Right ventricle myocardium inferior (tissue), 1 donor: ENCODE measurements at regions of chr5 and their contacts with region 1.

Region 1: DNA sequence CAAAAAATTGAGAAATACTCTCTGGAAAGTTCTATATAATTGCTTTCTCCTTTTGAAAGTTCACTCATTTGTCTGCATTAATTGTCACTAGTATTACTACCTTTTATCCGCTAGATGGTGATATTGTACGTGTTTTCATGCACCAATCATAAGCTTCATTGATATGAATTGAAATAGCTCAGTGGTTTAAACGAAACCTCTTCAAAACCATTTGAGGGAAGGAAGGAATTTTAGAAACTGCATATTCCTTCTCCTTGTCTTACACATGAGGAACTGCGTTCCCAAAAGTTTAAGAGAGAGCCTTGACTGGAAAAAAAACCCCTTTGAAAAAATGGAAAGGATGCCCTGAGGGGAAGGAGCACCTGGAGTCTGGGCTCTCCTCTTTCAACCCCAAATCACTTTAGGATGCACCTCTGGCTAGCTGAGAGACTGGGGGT is 98.6 kb downstream of the YTHDC2 start:
- DNase-seq: no peak
- ATAC-seq: no peak

Region 2: DNA sequence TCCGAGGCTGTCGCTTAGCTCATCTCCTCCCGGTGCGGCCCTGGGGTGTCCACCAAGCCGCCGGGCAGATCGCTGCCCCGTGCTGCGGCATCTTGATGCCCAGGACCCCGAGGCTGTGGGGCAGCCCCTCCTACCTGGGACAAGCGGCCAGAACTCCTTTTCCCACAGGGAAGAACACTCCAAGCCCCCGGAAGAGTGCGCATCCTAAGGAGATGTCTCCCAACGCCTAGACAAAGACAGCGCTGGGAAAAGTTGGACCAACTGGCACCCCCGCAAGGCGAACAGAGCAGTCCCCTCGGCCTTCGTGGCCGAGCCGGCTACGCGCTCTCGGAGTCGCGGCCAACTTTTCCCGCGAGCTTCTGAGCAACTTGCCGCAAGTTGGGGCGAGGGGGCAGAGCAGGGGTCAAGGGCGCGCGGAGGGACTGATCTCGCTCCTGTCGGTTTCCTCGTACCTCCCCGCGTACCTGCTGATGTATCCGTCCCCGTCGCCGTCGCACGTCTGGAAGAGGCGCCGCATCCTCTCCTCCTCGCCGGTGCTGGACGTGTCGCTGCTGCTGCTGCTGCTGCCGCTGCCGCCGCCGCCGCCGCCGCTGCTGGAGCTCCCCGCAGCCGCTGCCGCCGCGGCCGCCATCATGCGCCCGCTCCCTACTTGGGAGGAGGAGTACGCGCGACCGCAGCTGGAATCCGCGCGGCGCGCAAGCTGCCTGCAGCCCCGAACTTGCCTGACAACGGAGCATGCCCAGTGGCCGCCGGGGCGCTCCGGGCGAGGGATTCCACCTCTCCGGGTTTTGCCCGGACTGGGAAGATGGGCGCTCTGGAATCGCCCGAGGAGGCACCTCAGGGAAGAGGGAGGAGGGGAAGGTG is 124.1 kb before region 1 on chr5 and contains the start of gene MCC:
- intact Hi-C with region 1: no loop called
- DNase-seq: peak; percentile 81
- ATAC-seq: peak; percentile 88
- total RNA-seq, gene MCC: 31.9 TPM

Region 3: GRCh38 chr5:114018186-114018585 is 406.1 kb after region 1 on chr5:
- intact Hi-C with region 1: no loop called
- DNase-seq: no peak
- ATAC-seq: no peak

Region 4: DNA sequence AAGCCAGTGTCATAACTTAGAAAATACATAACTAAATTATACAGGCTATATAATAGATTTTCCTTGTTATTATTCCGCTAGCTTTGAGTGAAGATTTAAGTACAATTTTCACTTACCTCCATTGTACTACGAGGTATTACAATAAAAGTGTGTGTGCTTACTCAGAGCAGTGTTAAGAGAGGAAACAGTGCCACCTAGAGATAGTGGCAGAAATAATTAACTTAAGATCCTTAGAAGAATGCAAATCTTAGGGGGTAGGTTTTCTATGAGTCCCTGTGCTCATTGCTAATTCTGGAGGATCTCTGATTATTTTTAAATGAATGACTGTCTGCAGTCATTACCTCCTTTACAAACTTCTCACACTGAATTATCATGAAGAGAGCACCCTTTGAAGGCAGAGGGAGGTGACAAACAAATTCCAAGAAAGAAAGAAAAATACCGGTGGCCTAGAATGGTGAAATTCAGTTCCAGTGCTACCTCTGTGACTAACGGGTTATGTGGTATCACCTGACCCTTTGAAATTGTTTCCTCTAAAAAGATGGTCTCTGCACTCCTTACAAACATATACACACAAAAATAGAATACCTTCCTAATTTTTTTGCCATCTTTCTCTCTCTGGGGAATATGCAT is 1177.8 kb after region 1 on chr5:
- intact Hi-C with region 1: loop called (anchors 5 kb)
- DNase-seq: no peak
- ATAC-seq: no peak

Region 5: DNA sequence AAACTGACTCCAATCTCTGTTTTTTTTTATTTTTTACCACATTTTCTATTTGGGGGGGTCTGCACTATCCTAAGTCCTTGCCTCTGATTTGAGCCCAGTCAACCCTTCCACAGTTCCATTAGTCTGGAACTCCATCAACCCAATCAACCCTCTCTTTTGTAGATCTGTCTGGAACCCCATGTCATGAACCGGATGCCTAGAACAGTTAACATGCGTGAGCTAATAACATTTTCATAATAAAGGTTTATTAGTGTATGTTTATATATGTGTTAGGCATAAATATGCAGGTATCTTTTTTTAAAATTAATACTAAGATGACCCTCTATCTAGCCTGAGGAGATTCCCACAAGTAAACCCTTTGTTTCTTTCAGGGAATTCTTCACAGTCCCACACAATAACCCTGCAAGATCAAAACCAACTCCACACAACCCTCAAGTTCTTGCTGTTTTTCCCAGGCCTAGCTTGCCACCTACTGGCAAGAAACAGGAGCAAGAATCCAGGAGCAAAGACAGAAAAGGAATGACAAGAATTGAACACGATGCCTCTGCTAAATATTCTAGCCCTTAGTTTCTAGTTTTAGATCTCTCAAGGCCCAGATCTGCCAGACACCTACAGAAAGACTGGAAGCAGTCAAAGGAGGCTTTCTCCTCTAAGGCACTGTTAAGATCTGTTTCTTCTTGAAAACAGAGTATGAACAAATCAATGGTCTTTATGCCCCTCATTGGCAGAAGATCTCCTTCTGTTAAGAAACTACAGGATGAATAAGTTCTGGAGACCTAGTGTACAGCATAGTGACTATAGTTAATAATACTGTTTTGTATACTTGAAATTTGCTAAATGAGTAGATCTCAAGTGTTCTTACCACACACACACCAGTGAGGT is 1457.2 kb after region 1 on chr5:
- intact Hi-C with region 1: loop called (anchors 10 kb)
- DNase-seq: no peak
- ATAC-seq: no peak